ENCODE measurements at regions of chr3 and their contacts with region 1.

Region 1: DNA sequence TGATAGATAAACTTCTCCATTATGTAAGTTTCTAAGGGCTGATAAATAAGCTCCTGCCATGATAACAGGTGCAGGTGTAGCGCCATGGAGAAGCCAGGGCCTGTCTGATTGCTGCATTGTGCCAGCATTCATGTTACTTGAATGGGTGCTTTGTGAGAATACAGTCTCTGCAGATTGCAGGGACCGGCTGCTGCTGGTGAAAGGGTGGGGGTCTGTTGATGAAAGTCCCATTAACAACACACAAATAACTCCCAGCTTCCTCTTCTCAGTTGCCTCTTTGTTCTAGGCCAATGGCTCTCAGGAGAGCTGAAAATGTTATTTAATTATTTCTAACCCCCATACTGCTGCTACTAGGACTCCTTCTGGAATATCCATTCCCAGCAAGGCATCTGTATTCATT is 77.2 kb downstream of the RTP4 start:
- DNase-seq: peak in 3 of 10 donors; percentile 34 to 44 (median 34)
- H3K4me3 ChIP-seq: no peak overlapping the region
- H3K27ac ChIP-seq: peak overlapping the region in 8 of 59 donors; percentile 7 to 51 (median 26)
- H3K27me3 ChIP-seq: no peaks in the 10 kb centered on the region
- CTCF ChIP-seq: peak in 1 of 56 donors; percentile 9

Region 2: DNA sequence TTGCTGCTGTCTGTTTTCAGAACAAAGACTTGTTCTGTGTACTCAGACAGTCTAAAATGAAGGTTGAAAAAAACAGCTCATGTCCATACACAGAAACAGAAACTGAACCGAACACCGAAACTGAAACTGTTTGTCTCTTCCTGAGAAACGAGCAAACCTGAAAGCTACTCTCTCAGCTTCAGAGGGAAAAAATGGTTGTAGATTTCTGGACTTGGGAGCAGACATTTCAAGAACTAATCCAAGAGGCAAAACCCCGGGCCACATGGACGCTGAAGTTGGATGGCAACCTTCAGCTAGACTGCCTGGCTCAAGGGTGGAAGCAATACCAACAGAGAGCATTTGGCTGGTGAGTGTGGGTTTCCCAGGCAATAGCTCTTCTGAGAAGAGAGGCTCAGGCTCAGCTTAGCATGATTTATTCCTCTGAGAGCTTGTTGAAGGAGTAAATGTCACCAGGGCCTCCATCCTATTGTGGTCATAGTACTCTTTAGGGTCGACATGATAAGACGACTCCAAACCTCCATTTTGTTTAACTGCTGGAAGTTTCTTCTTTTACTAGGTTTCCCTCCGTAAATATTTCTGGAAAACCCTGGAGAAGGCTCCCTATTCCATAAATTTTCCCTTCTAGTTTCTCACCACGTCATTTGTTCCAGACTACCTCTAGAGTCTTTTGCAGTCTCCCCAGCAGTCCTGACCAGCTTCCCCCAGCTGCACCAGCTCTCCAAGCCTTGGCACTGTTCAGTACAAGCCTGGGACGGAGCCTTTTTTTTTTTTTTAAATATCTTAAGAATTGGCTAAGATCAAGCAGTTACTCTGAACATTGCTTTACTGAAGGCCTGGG is 76.9 kb before region 1 on chr3 and contains the start of gene RTP4:
- intact Hi-C with region 1: loop called in 1 of 2 experiments (anchors 10 kb)
- DNase-seq: peak in 1 of 10 donors; percentile 19
- H3K4me3 ChIP-seq: peak within 1 kb of the TSS; percentile 6 to 72 (median 53)
- H3K27ac ChIP-seq: peak within 1 kb of the TSS; percentile 60 to 98 (median 93)
- H3K27me3 ChIP-seq: no peaks in the 10 kb centered on the region
- CTCF ChIP-seq: peak in 1 of 56 donors; percentile 15
- total RNA-seq, gene RTP4: 0.31 to 7.0 (median 1.2) TPM in 116 of 120 experiments, not detected in the others

Region 3: DNA sequence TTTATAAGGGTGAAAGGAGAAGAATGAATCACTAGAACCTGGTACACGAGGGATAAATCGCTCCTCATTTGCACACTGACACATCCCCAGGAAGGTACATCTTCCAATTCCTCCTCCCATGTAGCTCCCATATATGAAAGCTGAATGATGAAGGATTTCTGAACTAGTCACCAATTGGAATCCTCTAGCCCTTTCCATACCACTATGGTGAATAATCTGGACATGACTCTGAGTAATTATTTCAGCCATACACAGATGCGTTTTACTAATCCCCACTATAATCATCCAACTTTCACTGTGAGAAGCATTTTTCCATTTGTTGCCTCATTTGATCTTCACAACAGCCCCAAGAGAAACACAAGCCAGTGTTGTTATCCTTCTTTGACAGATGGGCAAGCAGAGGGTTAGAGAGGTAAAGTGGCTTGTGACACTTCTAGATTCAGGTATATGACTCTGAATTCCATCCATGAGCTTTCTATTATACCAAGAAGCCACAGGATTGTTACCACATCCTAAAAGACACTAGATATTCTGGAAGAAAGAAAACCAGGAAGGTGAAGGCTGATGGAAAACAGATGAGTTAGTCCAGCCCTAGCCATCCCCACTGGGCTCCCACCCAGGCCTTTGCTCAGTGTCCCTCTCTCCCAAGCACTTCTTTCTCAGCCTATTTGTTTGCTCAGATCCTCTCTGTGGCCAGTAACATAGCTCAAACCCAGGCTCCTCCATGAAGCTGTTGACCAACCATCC is 322.1 kb after region 1 on chr3:
- intact Hi-C with region 1: no loop called
- DNase-seq: no peak
- H3K4me3 ChIP-seq: no peak overlapping the region
- H3K27ac ChIP-seq: no peak overlapping the region
- H3K27me3 ChIP-seq: no peaks in the 10 kb centered on the region
- CTCF ChIP-seq: no peak